Upper lobe of right lung (tissue), 1 donor: ENCODE measurements at regions of chr9 and their contacts with region 1.

Region 1: DNA sequence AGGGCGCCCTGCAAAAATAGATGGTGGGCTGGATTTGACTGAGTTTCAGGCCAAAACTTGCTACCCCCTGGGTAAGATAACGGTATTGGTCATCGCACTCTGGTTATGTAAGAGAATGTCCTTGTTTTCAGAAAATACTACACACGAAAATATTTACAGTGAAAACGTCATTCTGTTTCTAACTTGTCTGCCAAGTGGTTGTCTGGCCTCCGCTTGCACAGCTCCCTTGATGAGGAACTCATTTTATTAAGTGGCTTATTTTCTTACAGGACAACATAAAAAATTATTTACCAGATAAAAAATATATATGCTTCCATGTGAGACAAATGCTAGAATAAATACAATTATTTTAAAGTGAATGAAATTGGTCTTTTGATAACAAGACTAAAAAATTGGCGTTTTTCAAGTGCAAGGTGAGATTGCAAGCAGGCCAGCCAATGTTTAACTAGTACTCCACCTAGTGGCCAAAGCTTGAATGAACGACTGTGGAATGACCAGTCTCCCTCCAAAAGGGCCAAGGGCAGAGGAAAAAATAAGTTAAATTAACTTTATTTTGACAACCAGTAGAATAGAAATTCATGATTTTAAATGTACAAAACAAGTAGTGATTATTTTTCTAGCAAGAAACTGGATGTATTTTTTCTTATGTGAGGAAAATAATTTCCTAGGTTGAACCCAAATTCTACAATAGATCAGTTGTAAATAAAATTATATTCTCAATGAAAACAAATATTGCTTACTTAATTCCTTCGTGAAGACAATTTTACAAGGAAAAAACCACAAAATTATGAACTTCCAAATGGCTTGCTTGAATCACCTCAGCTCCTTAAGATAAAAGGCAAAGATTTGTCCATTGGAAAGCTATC is 93.2 kb downstream of the ZFAND5 start:
- DNase-seq: no peak
- ATAC-seq: peak; percentile 80
- H3K4me3 ChIP-seq: no peak overlapping the region
- H3K27ac ChIP-seq: no peak overlapping the region
- H3K4me1 ChIP-seq: no peaks in the 10 kb centered on the region
- H3K27me3 ChIP-seq: no peaks in the 10 kb centered on the region
- CTCF ChIP-seq: peak; percentile 89

Region 2: GRCh38 chr9:72038890-72039410 is 232.9 kb before region 1 on chr9:
- intact Hi-C with region 1: loop called (anchors 5 kb)
- DNase-seq: peak; percentile 75
- ATAC-seq: peak; percentile 94
- H3K4me3 ChIP-seq: no peak overlapping the region
- H3K27ac ChIP-seq: no peak overlapping the region
- H3K4me1 ChIP-seq: no peaks in the 10 kb centered on the region
- H3K27me3 ChIP-seq: no peaks in the 10 kb centered on the region
- CTCF ChIP-seq: peak; percentile 98

Region 3: DNA sequence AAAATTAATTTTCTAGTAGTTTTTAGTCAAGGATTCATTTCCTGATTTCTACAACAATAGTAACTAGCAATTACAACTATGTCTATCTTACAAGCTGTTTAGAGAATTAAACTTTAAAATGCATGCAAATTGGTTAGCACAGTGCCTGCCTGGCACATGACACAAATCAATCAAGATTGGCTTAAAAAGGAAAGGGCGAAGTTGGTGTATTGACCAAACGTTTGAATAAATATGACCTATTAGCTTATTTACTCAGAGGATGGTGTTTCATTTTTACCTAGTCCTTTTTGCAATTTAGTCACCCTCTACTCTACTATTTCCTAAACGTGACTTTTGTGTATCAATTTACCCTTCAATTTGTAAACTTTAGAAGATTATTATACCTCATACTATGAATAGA is 39.1 kb before region 1 on chr9:
- intact Hi-C with region 1: no loop called
- DNase-seq: no peak
- ATAC-seq: no peak
- H3K4me3 ChIP-seq: no peak overlapping the region
- H3K27ac ChIP-seq: no peak overlapping the region
- H3K4me1 ChIP-seq: no peaks in the 10 kb centered on the region
- H3K27me3 ChIP-seq: peaks cover 3% of the 10 kb centered on the region
- CTCF ChIP-seq: no peak